ENCODE measurements at regions of chr17 and their contacts with region 1.

Region 1: DNA sequence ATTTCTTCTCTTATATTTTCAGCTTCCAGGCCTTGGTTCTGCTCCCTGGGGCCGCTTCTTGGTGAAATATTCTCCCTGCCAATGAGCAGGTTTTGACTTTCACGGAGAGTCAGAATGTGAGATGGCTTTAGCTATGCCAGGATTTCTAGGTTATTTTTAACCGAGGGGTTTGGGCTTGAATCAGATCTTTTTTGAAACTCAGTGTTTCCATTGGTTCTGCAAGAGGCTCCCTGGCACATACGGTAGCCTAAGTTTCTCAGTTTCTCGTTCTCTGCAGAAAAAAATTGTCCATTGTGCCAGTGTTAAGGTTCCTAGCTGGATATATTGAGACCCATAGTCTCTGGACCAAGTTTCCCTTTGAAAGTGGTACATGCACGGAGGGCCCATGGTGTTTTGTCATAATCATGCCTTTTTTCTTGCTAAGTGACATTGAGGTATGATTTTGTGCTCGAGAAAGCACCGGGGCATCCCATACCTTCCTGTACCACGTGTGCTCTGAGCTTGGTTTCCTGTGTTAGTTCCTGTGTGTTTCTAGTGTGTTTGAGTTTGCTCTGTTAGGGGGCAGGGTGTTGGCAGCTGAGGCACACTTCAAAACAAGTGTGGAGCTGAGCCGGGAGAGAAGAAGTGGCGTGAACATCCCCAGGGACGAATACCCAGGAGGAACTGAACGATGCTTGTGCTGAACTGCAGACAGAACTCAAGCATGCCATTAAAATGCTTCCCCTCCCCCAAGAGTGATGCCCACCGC is 127.2 kb downstream of the HS3ST3B1 start:
- DNase-seq: peak in 8 of 9 donors; percentile 33 to 76 (median 70)
- ATAC-seq: peak; percentile 99
- H3K4me3 ChIP-seq: peak overlapping the region; percentile 57
- H3K4me3 Mint-ChIP-seq: peak overlapping the region; percentile 76 to 96 (median 84)
- H3K27ac ChIP-seq: peak overlapping the region; percentile 73
- H3K27ac Mint-ChIP-seq: peak overlapping the region; percentile 68 to 97 (median 95)
- H3K4me1 ChIP-seq: peaks cover 30 to 39% of the 10 kb centered on the region in 2 donors
- H3K4me1 Mint-ChIP-seq: peaks cover 34 to 68% (median 61%) of the 10 kb centered on the region in 7 donors
- H3K27me3 ChIP-seq: no peaks in the 10 kb centered on the region
- H3K27me3 Mint-ChIP-seq: no peaks in the 10 kb centered on the region

Region 2: GRCh38 chr17:14069251-14070021 is 358.6 kb before region 1 on chr17 and contains the start of gene COX10:
- CTCF ChIA-PET with region 1: no interaction called
- POLR2A ChIA-PET with region 1: no interaction called
- intact Hi-C with region 1: loop called in 1 of 2 experiments (anchors 10 kb)
- DNase-seq: peak; percentile 71 to 93 (median 78)
- ATAC-seq: peak; percentile 99
- H3K4me3 ChIP-seq: peak within 1 kb of the TSS; percentile 83
- H3K4me3 Mint-ChIP-seq: peak within 1 kb of the TSS; percentile 91 to 98 (median 94)
- H3K27ac ChIP-seq: peak within 1 kb of the TSS; percentile 89
- H3K27ac Mint-ChIP-seq: peak within 1 kb of the TSS; percentile 77 to 97 (median 92)
- H3K4me1 ChIP-seq: peaks cover 7 to 22% of the 10 kb centered on the region in 2 donors
- H3K4me1 Mint-ChIP-seq: peaks cover 29 to 59% (median 49%) of the 10 kb centered on the region in 7 donors
- H3K27me3 ChIP-seq: no peaks in the 10 kb centered on the region
- H3K27me3 Mint-ChIP-seq: no peaks in the 10 kb centered on the region
- total RNA-seq, gene COX10: 16.2 to 30.6 (median 19.3) TPM

Region 3: DNA sequence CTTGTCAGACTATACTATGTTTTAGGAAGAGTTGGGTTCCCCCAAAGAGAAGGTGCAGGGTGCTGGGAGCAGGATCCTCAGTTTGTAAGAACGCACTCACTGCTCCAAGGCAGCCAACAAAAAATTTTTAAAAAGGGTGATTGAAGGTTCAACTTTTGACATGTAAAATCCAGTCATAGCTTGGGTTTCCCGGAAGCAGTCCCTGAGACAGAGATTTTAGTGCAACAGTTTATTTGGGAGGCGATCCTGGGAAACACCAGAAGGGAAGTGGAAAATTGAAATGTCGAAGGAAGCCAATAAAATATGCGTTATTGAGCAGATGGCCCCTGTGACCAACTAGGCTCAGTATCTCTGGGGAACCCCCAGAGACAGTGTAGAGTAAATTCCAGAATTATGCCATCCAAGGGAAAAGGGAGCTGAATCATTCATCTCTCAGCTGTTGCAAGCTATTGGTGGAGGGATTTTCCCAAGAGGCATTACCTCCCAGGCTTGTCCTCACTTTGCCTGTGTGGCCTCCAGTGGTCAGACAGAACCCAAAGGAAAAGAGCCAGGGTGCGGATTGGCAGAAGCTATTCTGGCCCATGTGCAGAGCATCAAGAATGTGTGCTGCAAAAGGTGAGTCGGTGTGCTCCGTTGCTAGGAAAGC is 54.3 kb before region 1 on chr17:
- CTCF ChIA-PET with region 1: no interaction called
- POLR2A ChIA-PET with region 1: no interaction called
- intact Hi-C with region 1: loop called in 1 of 2 experiments (anchors 10 kb)
- DNase-seq: no peak
- ATAC-seq: no peak
- H3K4me3 ChIP-seq: no peak overlapping the region
- H3K4me3 Mint-ChIP-seq: no peak overlapping the region
- H3K27ac ChIP-seq: no peak overlapping the region
- H3K27ac Mint-ChIP-seq: no peak overlapping the region
- H3K4me1 ChIP-seq: no peaks in the 10 kb centered on the region
- H3K4me1 Mint-ChIP-seq: peaks cover 0 to 13% (median 9%) of the 10 kb centered on the region in 7 donors
- H3K27me3 ChIP-seq: no peaks in the 10 kb centered on the region
- H3K27me3 Mint-ChIP-seq: no peaks in the 10 kb centered on the region

Region 4: GRCh38 chr17:14409292-14409691 is 18.8 kb before region 1 on chr17:
- CTCF ChIA-PET with region 1: interaction called, 22 read pairs
- POLR2A ChIA-PET with region 1: interaction called, 48 read pairs
- intact Hi-C with region 1: loop called (anchors 1 kb)
- DNase-seq: no peak
- ATAC-seq: no peak
- H3K4me3 ChIP-seq: no peak overlapping the region
- H3K4me3 Mint-ChIP-seq: no peak overlapping the region
- H3K27ac ChIP-seq: no peak overlapping the region
- H3K27ac Mint-ChIP-seq: no peak overlapping the region
- H3K4me1 ChIP-seq: peaks cover 8% of the 10 kb centered on the region in 2 donors
- H3K4me1 Mint-ChIP-seq: peaks cover 11 to 37% (median 18%) of the 10 kb centered on the region in 7 donors
- H3K27me3 ChIP-seq: no peaks in the 10 kb centered on the region
- H3K27me3 Mint-ChIP-seq: no peaks in the 10 kb centered on the region

Region 5: GRCh38 chr17:14514983-14515382 is 86.9 kb after region 1 on chr17:
- CTCF ChIA-PET with region 1: no interaction called
- POLR2A ChIA-PET with region 1: no interaction called
- intact Hi-C with region 1: no loop called
- DNase-seq: no peak
- ATAC-seq: no peak
- H3K4me3 ChIP-seq: no peak overlapping the region
- H3K4me3 Mint-ChIP-seq: no peak overlapping the region
- H3K27ac ChIP-seq: no peak overlapping the region
- H3K27ac Mint-ChIP-seq: no peak overlapping the region
- H3K4me1 ChIP-seq: no peaks in the 10 kb centered on the region
- H3K4me1 Mint-ChIP-seq: no peaks in the 10 kb centered on the region
- H3K27me3 ChIP-seq: no peaks in the 10 kb centered on the region
- H3K27me3 Mint-ChIP-seq: peaks cover 0 to 4% (median 0%) of the 10 kb centered on the region in 5 donors

Region 6: GRCh38 chr17:14672830-14673229 is 244.8 kb after region 1 on chr17:
- CTCF ChIA-PET with region 1: no interaction called
- POLR2A ChIA-PET with region 1: no interaction called
- intact Hi-C with region 1: no loop called
- DNase-seq: no peak
- ATAC-seq: peak; percentile 37
- H3K4me3 ChIP-seq: no peak overlapping the region
- H3K4me3 Mint-ChIP-seq: no peak overlapping the region
- H3K27ac ChIP-seq: no peak overlapping the region
- H3K27ac Mint-ChIP-seq: no peak overlapping the region
- H3K4me1 ChIP-seq: no peaks in the 10 kb centered on the region
- H3K4me1 Mint-ChIP-seq: no peaks in the 10 kb centered on the region
- H3K27me3 ChIP-seq: no peaks in the 10 kb centered on the region
- H3K27me3 Mint-ChIP-seq: peaks cover 0 to 7% (median 4%) of the 10 kb centered on the region in 5 donors